H1 (cell line): ENCODE measurements at regions of chr1 and their contacts with region 1.

Region 1: GRCh38 chr1:181936768-181937581 is 124.5 kb downstream of the ZNF648 start:
- DNase-seq: peak; percentile 77 to 84
- H3K4me3 ChIP-seq: peak overlapping the region in 1 of 4 experiments; percentile 24; a peak in 1 of 8 replicates
- H3K27ac ChIP-seq: no peak overlapping the region
- H3K4me1 ChIP-seq: no peaks in the 10 kb centered on the region
- H3K27me3 ChIP-seq: no peaks in the 10 kb centered on the region
- CTCF ChIP-seq: peak; percentile 77 to 92 (median 90)
- EP300 ChIP-seq: no peak
- POLR2A ChIP-seq: no peak
- RAD21 ChIP-seq: peak; percentile 96 to 98

Region 2: DNA sequence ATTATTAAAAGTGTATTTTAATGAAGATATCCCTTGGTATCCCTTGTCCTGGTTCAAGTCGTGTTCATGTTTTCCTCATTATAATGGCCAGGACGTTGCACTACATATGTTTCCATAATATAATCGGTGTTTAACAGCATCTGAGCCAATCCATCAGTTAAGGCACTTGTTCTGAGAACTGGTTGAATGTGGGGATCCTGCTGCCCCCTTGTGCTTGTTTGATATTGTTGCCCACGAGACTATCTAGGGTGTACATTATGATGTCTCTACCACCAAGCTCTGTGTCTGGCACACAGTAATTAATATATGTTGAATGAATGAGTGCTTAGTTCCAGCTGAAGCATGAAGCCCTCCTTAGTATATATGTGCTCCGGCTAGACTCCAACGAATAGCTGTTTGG is 260.7 kb before region 1 on chr1:
- CTCF ChIA-PET with region 1: interaction called, 11 read pairs
- POLR2A ChIA-PET with region 1: no interaction called
- DNase-seq: peak in 1 of 2 experiments; percentile 52
- H3K4me3 ChIP-seq: no peak overlapping the region
- H3K27ac ChIP-seq: no peak overlapping the region
- H3K4me1 ChIP-seq: peaks cover 0 to 5% (median 2%) of the 10 kb centered on the region in 4 experiments; a peak in 4 of 7 replicates
- H3K27me3 ChIP-seq: no peaks in the 10 kb centered on the region
- CTCF ChIP-seq: peak in 2 of 3 experiments; percentile 67 to 73; a peak in 3 of 4 replicates
- EP300 ChIP-seq: no peak
- POLR2A ChIP-seq: no peak
- RAD21 ChIP-seq: peak; percentile 82 to 87

Region 3: GRCh38 chr1:181737056-181737455 is 199.9 kb before region 1 on chr1:
- CTCF ChIA-PET with region 1: interaction called, 10 read pairs
- POLR2A ChIA-PET with region 1: no interaction called
- DNase-seq: no peak
- H3K4me3 ChIP-seq: no peak overlapping the region
- H3K27ac ChIP-seq: no peak overlapping the region
- H3K4me1 ChIP-seq: no peaks in the 10 kb centered on the region
- H3K27me3 ChIP-seq: no peaks in the 10 kb centered on the region
- CTCF ChIP-seq: peak; percentile 27 to 42 (median 41)
- EP300 ChIP-seq: no peak
- POLR2A ChIP-seq: no peak
- RAD21 ChIP-seq: peak; percentile 65 to 78

Region 4: DNA sequence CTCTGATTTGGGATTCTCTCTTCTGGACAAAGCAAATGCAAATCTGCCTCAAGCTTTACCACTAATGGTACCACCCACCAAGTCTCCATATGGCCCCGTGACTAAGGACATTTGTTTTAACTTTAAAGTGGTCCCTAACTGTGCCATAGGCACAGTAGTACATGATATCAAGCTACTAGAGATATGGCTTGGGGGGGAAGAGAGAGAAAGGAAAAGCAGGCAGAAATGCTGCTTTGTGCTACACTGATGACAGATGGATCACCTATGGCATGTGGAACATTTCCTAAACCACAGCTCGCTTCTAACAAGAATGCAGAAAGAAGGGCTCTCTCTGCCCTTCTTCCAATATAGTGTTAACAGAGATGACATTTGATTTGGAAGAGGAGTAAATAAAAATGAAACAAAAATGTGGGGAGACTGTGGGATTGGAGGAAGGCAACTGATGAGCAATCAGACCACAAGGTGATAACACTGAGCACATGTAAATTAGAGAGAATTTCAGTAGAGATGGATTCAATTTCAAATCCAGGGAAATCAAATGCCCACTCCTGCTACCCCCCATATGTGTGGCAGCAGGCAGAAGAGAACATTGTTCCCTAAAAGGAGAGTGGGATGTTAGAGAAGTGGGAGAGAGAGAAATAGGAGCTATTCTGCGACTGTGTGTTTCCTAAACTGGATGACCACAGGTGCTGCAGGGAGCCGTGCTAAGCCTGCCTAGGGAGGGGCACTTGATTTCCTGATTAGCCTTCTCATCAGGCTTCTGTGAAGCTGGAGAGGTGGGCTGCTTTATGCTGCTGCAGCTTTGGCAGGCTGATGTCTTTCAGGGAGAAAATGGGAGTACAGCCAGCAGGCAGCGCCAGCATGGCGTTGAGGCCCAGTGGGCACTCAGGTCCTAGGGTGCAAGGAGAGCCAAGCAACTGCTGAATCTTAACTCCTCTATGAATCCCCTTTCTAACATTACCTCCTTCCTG is 49.2 kb after region 1 on chr1:
- CTCF ChIA-PET with region 1: interaction called, 11 read pairs
- POLR2A ChIA-PET with region 1: no interaction called
- DNase-seq: no peak
- H3K4me3 ChIP-seq: no peak overlapping the region
- H3K27ac ChIP-seq: no peak overlapping the region
- H3K4me1 ChIP-seq: peaks cover 0 to 7% (median 4%) of the 10 kb centered on the region in 4 experiments; a peak in 5 of 7 replicates
- H3K27me3 ChIP-seq: no peaks in the 10 kb centered on the region
- CTCF ChIP-seq: no peak
- EP300 ChIP-seq: no peak
- POLR2A ChIP-seq: no peak
- RAD21 ChIP-seq: no peak

Region 5: GRCh38 chr1:182035097-182035782 is 98.3 kb after region 1 on chr1:
- CTCF ChIA-PET with region 1: interaction called, 12 read pairs
- POLR2A ChIA-PET with region 1: no interaction called
- DNase-seq: peak in 1 of 2 experiments; percentile 68
- H3K4me3 ChIP-seq: no peak overlapping the region
- H3K27ac ChIP-seq: no peak overlapping the region
- H3K4me1 ChIP-seq: no peaks in the 10 kb centered on the region; a peak in 1 of 7 replicates
- H3K27me3 ChIP-seq: no peaks in the 10 kb centered on the region; a peak in 1 of 7 replicates
- CTCF ChIP-seq: peak; percentile 34 to 59 (median 53); a peak in 3 of 4 replicates
- EP300 ChIP-seq: no peak
- POLR2A ChIP-seq: no peak
- RAD21 ChIP-seq: peak in 1 of 2 experiments; percentile 31; a peak in 2 of 4 replicates